Calu3 (cell line): ENCODE measurements at regions of chr4 and their contacts with region 1.

Region 1: GRCh38 chr4:866761-867390 is 40.9 kb upstream of the CPLX1 start:
- DNase-seq: no peak
- H3K4me3 Mint-ChIP-seq: no peak overlapping the region
- H3K27ac Mint-ChIP-seq: no peak overlapping the region
- H3K4me1 Mint-ChIP-seq: no peaks in the 10 kb centered on the region
- H3K27me3 Mint-ChIP-seq: no peaks in the 10 kb centered on the region
- CTCF ChIP-seq: no peak

Region 2: GRCh38 chr4:888029-888428 is 21.2 kb after region 1 on chr4:
- CTCF ChIA-PET with region 1: no interaction called
- intact Hi-C with region 1: loop called (anchors 2 kb)
- DNase-seq: no peak
- H3K4me3 Mint-ChIP-seq: no peak overlapping the region
- H3K27ac Mint-ChIP-seq: no peak overlapping the region
- H3K4me1 Mint-ChIP-seq: no peaks in the 10 kb centered on the region
- H3K27me3 Mint-ChIP-seq: no peaks in the 10 kb centered on the region
- CTCF ChIP-seq: no peak

Region 3: GRCh38 chr4:1277667-1278335 is 410.9 kb after region 1 on chr4:
- CTCF ChIA-PET with region 1: no interaction called
- intact Hi-C with region 1: no loop called
- DNase-seq: no peak
- H3K4me3 Mint-ChIP-seq: no peak overlapping the region
- H3K27ac Mint-ChIP-seq: no peak overlapping the region
- H3K4me1 Mint-ChIP-seq: no peaks in the 10 kb centered on the region
- H3K27me3 Mint-ChIP-seq: peaks cover 15% of the 10 kb centered on the region
- CTCF ChIP-seq: no peak